ENCODE measurements at regions of chr6 and their contacts with region 1.

Region 1: GRCh38 chr6:163943607-163944385 is 529.3 kb downstream of the QKI start:
- DNase-seq: peak; percentile 37 to 58
- ATAC-seq: peak; percentile 44 to 88 (median 63)
- H3K4me3 ChIP-seq: peak overlapping the region in 1 of 10 donors; percentile 8
- H3K27ac ChIP-seq: peak overlapping the region in 8 of 10 donors; percentile 17 to 65 (median 32)
- H3K4me1 ChIP-seq: peaks cover 0 to 45% (median 38%) of the 10 kb centered on the region in 9 donors
- H3K27me3 ChIP-seq: no peaks in the 10 kb centered on the region
- CTCF ChIP-seq: no peak

Region 2: GRCh38 chr6:163764565-163764964 is 179.2 kb before region 1 on chr6:
- intact Hi-C with region 1: loop called in 1 of 10 experiments (anchors 5 kb)
- DNase-seq: no peak
- ATAC-seq: peak in 5 of 8 donors; percentile 49 to 82 (median 68)
- H3K4me3 ChIP-seq: no peak overlapping the region
- H3K27ac ChIP-seq: peak overlapping the region in 9 of 10 donors; percentile 8 to 74 (median 45)
- H3K4me1 ChIP-seq: peaks cover 0 to 23% (median 20%) of the 10 kb centered on the region in 9 donors
- H3K27me3 ChIP-seq: no peaks in the 10 kb centered on the region
- CTCF ChIP-seq: no peak

Region 3: DNA sequence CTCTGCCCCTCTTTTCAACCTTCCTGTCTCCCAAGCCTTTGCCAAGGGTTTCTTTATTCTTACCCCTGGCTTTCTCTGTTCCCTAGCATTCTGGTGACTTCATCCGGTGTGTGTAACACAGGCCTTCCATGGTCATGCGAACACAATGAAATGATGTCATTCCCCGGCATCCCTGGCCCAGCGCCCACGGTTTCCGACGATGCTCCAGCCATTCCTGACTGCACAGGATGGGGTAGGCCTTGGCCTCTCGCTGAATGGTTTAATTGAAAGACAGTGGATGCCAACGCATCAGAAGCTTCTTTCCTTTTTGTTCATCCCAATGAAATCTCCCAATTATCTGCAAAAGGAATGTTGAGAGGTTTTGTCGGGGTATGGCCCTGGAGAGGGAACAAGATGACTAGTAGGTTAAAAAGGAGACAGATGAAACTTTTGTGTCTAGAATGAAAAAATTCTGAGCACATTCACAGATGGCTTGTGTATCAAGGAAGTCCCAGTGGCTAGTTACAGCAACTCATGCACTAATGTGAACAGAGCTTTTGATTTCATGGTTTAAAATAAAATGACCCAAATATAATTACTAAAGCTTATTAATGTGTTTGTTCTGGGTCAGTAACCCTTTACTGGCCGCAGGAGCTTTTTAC is 125.7 kb after region 1 on chr6:
- intact Hi-C with region 1: no loop called
- DNase-seq: peak; percentile 75 to 87
- ATAC-seq: peak; percentile 75 to 99 (median 94)
- H3K4me3 ChIP-seq: no peak overlapping the region
- H3K27ac ChIP-seq: peak overlapping the region in 9 of 10 donors; percentile 23 to 82 (median 74)
- H3K4me1 ChIP-seq: peaks cover 0 to 19% (median 8%) of the 10 kb centered on the region in 9 donors
- H3K27me3 ChIP-seq: no peaks in the 10 kb centered on the region
- CTCF ChIP-seq: no peak

Measured in heart right ventricle (tissue), 16 donors.